Activated T-helper 1 cell treated with anti-CD3 and anti-CD28 coated beads, Interleukin-12 subunit alpha, Interleukin-12 subunit beta, Interleukin-2, Interleukin-4 antibody, amounts not matched to agents 30 ng/mL and 10 ng/mL and 1 ng/mL, durations not matched to agents 14 hours and 24 hours and 36 hours (primary cell): ENCODE measurements at regions of chr5 and their contacts with region 1.

Region 1: DNA sequence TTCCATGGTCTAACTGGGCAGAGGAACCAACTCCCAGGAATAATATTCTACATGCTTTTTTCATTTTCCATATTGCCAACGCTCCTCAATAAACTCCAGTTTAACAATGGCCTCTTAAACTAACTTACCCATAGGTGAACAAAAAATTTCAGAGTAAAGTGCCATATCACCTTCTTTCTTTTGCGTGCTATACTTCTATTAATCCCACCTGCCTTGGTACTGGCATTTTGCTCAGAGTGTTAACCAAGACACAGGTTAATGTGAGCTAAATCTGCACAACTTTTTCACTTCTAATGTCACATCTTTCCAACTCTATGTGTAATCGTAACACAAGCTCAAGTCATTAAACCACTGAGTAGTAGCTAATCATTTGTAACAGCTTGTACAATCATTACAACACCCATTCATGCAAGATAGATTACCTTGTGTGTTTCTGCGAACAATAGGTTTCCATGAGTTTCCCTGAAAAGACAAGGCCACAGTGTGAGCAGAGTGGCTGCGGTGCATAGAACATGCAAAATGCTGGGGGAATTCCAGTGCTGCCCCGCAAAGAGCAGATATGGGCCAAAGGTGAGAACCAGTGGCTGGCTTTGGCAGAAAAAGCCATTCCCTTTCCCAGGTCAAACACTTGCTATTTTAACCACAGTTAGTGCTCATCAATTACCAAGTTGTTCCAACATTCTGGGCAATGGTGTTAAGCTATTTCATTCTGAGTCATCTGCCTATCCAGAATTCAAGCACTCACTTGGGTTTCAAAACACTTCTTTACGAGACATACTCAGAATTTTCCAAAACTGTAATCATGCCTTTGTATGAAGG is 42.8 kb downstream of the TIMD4 start:
- DNase-seq: peak; percentile 80
- H3K4me3 Mint-ChIP-seq: peak overlapping the region; percentile 89
- H3K27ac Mint-ChIP-seq: peak overlapping the region; percentile 99
- H3K4me1 Mint-ChIP-seq: peaks cover 80% of the 10 kb centered on the region
- H3K27me3 Mint-ChIP-seq: no peaks in the 10 kb centered on the region

Region 2: DNA sequence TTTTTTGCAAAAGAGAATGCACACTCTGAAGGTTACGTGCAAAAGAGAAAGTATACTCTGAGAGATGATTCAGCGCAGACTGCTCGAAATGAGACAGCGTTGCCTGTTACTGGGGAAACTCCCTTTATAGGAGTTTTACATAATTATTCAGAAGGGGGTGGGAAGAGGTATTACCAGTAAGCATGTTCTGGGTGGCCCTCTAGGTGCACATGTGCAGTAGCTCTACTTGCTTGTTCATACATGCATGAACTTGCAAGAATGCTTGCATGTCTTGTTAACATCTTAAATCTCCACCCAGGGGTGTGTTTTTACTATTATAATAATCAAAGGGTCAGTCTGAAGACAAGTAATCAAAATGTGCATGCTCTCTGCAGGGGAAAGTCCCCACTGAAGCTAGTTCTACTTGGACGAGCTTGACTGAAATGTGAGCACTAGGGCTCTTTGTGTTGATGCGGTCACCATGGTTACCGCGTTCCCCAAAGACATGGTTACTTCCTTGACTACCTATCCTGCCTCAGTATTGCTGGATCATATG is 517.8 kb before region 1 on chr5:
- intact Hi-C with region 1: loop called (anchors 5 kb)
- DNase-seq: peak; percentile 59
- H3K4me3 Mint-ChIP-seq: peak overlapping the region; percentile 53
- H3K27ac Mint-ChIP-seq: peak overlapping the region; percentile 79
- H3K4me1 Mint-ChIP-seq: peaks cover 18% of the 10 kb centered on the region
- H3K27me3 Mint-ChIP-seq: peaks cover 7% of the 10 kb centered on the region

Region 3: DNA sequence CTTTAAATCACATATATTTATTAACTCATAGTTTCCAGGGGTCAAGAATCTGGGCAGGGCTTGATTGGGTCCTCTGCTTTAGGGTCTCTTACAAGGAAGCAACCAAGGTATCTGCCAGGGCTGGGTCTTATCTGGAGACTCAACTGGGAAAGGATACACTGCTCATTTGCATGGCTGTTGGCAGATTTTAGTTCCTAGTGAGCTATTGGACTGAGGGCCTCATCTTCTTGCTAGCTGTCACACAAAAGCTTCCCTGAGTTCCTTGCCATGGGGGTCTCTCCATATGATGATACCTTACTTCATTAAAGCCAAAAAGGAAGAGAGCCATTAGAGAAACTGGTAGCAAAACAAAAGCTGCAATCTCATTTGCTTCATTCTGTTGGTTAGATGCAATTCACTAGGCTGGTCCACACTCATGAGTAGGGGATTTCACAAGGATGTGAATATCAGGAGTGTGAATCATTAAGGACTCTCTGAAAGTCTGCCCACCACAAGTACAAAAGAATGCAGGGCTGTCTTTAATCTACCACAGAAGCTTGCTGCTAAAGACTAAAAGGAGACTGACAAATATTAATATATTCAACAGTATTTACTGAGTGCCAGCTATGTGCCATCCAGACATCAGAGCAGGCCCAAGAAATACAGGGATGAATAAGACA is 84.8 kb after region 1 on chr5:
- intact Hi-C with region 1: loop called (anchors 1 kb)
- DNase-seq: no peak
- H3K4me3 Mint-ChIP-seq: peak overlapping the region; percentile 7
- H3K27ac Mint-ChIP-seq: peak overlapping the region; percentile 76
- H3K4me1 Mint-ChIP-seq: peaks cover 46% of the 10 kb centered on the region
- H3K27me3 Mint-ChIP-seq: no peaks in the 10 kb centered on the region

Region 4: GRCh38 chr5:157108976-157109375 is 188.7 kb after region 1 on chr5 and contains the start of gene HAVCR2:
- intact Hi-C with region 1: loop called (anchors 1 kb)
- DNase-seq: peak; percentile 65
- H3K4me3 Mint-ChIP-seq: peak within 1 kb of the TSS; percentile 91
- H3K27ac Mint-ChIP-seq: peak within 1 kb of the TSS; percentile 94
- H3K4me1 Mint-ChIP-seq: peaks cover 63% of the 10 kb centered on the region
- H3K27me3 Mint-ChIP-seq: no peaks in the 10 kb centered on the region
- total RNA-seq, gene HAVCR2: 128 and 129 TPM in 2 replicates

Region 5: DNA sequence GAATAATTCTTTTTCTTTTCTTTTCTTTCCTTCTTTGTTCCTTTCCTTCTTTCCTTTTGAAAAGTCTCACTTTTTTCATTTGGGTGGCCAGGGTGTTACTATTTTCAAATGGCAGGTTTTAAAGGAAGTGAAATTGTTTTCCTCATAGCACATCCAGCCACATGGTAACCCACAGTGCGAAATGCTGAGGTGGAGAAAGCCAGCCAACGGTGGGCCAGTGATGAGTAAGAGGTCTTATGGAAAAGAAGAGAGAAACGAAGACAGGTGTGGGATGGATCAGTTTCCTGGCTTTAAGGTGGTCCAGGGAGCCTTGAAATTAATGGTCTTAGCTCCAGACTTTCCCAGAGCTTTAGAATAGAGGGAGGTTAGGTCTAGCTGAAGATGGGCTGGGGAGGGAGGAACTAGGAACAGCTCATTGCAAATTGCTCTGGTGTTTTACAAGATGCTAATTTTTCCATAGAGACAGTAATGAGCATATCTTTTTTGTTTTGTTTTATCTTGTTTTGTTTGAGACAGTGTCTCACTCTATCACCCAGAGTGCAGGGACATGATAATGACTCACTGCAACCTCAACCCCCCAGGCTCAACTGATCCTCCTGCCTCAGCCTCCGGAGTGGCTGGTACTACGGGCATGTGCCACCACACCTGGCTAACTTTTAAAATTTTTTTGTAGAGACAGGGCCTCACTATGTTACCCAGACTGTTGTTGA is 278.2 kb after region 1 on chr5:
- intact Hi-C with region 1: loop called (anchors 5 kb)
- DNase-seq: no peak
- H3K4me3 Mint-ChIP-seq: peak overlapping the region; percentile 68
- H3K27ac Mint-ChIP-seq: peak overlapping the region; percentile 94
- H3K4me1 Mint-ChIP-seq: peaks cover 94% of the 10 kb centered on the region
- H3K27me3 Mint-ChIP-seq: no peaks in the 10 kb centered on the region

Region 6: GRCh38 chr5:157540707-157541446 is 620.6 kb after region 1 on chr5:
- intact Hi-C with region 1: loop called (anchors 5 kb)
- DNase-seq: peak; percentile 55
- H3K4me3 Mint-ChIP-seq: peak overlapping the region; percentile 63
- H3K27ac Mint-ChIP-seq: peak overlapping the region; percentile 93
- H3K4me1 Mint-ChIP-seq: peaks cover 90% of the 10 kb centered on the region
- H3K27me3 Mint-ChIP-seq: no peaks in the 10 kb centered on the region